Activated B cell treated with CpG ODN at 0.5 μM for 24 hours (primary cell): ENCODE measurements at regions of chr17 and their contacts with region 1.

Region 1: GRCh38 chr17:28416703-28417311 is 10.8 kb upstream of the SLC46A1 start:
- DNase-seq: peak; percentile 33
- ATAC-seq: peak; percentile 94
- H3K4me3 Mint-ChIP-seq: no peak overlapping the region
- H3K27ac Mint-ChIP-seq: no peak overlapping the region
- H3K4me1 Mint-ChIP-seq: peaks cover 4% of the 10 kb centered on the region
- H3K27me3 Mint-ChIP-seq: peaks cover 18% of the 10 kb centered on the region
- CTCF ChIP-seq: peak; percentile 72

Region 2: DNA sequence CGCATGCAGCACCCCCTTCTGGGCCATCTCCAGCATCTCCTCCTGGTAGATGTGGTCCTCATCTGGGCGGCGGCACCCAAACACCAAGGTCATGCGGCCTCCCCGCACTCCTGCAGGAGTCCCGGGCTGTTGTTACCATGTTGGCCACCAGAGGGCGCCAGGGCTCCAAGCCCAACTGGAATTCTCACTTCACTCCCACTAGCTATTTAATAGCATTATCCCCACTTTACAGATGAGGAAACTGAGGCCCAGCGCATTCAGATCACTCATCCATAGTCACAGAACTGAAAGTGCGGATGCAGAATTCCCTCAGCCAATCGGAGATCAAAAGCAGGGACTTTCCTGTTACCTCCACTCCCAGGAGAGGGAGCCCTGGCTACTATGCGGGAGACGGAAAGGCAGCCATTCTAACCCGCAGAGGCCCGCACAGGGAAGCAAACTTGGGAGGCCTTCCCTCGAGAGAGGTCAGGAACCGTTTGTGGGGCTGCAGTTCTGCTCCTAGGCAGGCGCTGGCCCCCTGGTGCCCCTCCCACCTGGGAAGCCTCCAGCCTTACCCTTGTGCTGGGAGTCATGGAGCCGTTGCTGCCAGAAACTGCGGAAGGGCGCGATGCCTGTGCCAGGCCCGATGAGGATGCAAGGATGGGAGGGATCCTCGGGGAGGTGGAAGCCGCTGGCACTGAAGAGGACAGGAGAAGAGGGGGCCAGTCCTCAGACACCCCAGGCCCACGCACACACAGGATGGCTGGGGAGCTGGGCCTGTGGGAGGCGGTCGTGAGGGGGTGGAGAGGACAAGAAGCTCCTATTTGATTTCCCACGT is 656.5 kb before region 1 on chr17:
- CTCF ChIA-PET with region 1: interaction called, 4 read pairs
- POLR2A ChIA-PET with region 1: no interaction called
- intact Hi-C with region 1: loop called (anchors 5 kb)
- DNase-seq: peak; percentile 73
- ATAC-seq: peak; percentile 50
- H3K4me3 Mint-ChIP-seq: no peak overlapping the region
- H3K27ac Mint-ChIP-seq: no peak overlapping the region
- H3K4me1 Mint-ChIP-seq: no peaks in the 10 kb centered on the region
- H3K27me3 Mint-ChIP-seq: peaks cover 4% of the 10 kb centered on the region
- CTCF ChIP-seq: peak; percentile 66

Region 3: DNA sequence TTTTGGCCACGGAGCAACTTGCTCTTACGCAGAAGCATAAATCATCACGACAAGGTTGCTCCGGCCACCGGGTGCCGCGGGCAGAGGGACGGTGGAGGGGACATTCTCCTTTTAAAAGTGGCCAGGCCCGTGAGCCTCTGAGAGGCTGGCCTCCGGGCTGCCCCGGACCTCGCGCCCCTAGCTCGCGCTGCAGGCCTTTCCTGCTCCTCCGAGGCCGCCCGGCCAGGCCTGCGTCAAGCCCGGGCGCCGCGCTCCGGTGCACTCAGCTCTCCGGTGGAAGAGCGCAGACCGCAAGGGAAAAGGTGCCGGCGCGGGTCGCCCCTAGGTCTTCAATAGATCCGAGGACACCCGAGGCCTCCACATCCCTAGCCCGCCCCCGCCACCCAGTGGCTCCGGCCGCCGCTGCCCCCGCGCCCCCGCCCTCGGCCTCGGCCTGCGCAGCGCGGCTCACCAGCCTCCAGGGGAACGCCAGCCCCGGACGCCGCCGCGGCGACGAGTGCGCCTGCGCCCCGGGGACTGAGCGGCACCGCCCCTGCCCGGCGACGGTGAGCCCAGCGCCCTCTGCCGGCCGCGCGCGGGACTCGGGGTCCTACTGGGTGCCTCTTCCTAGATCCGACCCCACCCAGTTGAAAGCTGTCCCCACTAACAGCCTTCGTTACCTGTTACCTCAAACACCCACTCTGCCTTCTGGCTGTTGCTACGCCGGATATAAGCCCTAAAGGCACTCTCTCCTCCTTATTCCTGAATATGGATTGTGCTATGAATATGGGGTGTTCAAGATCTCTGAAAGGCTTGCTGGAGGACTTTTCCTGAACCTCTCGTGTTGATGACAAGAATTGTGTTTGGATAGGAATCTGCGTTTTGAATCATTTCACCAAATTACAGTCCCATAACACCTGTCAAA is 523.7 kb before region 1 on chr17 and contains the start of gene LYRM9:
- CTCF ChIA-PET with region 1: interaction called, 3 read pairs
- POLR2A ChIA-PET with region 1: no interaction called
- intact Hi-C with region 1: loop called (anchors 2 kb)
- DNase-seq: peak; percentile 97
- ATAC-seq: peak; percentile 96
- H3K4me3 Mint-ChIP-seq: peak within 1 kb of the TSS; percentile 84
- H3K27ac Mint-ChIP-seq: peak within 1 kb of the TSS; percentile 69
- H3K4me1 Mint-ChIP-seq: peaks cover 17% of the 10 kb centered on the region
- H3K27me3 Mint-ChIP-seq: no peaks in the 10 kb centered on the region
- CTCF ChIP-seq: peak; percentile 91
- total RNA-seq, gene LYRM9: 7.2 and 7.5 TPM in 2 replicates

Region 4: GRCh38 chr17:28252436-28252835 is 164.4 kb before region 1 on chr17:
- CTCF ChIA-PET with region 1: interaction called, 3 read pairs
- POLR2A ChIA-PET with region 1: no interaction called
- intact Hi-C with region 1: loop called (anchors 5 kb)
- DNase-seq: no peak
- ATAC-seq: no peak
- H3K4me3 Mint-ChIP-seq: no peak overlapping the region
- H3K27ac Mint-ChIP-seq: no peak overlapping the region
- H3K4me1 Mint-ChIP-seq: peaks cover 6% of the 10 kb centered on the region
- H3K27me3 Mint-ChIP-seq: peaks cover 17% of the 10 kb centered on the region
- CTCF ChIP-seq: no peak

Region 5: GRCh38 chr17:28405632-28406472 is 11.0 kb before region 1 on chr17 and contains the start of gene SLC46A1:
- CTCF ChIA-PET with region 1: interaction called, 26 read pairs
- POLR2A ChIA-PET with region 1: interaction called, 3 read pairs
- intact Hi-C with region 1: loop called (anchors 1 kb)
- DNase-seq: peak; percentile 52
- ATAC-seq: peak; percentile 88
- H3K4me3 Mint-ChIP-seq: peak within 1 kb of the TSS; percentile 83
- H3K27ac Mint-ChIP-seq: peak within 1 kb of the TSS; percentile 41
- H3K4me1 Mint-ChIP-seq: peaks cover 8% of the 10 kb centered on the region
- H3K27me3 Mint-ChIP-seq: peaks cover 4% of the 10 kb centered on the region
- CTCF ChIP-seq: no peak
- total RNA-seq, gene SLC46A1: 1.5 and 2.1 TPM in 2 replicates

Region 6: GRCh38 chr17:28494445-28495188 is 77.8 kb after region 1 on chr17:
- CTCF ChIA-PET with region 1: no interaction called
- POLR2A ChIA-PET with region 1: no interaction called
- intact Hi-C with region 1: no loop called
- DNase-seq: peak; percentile 82
- ATAC-seq: peak; percentile 95
- H3K4me3 Mint-ChIP-seq: no peak overlapping the region
- H3K27ac Mint-ChIP-seq: no peak overlapping the region
- H3K4me1 Mint-ChIP-seq: peaks cover 11% of the 10 kb centered on the region
- H3K27me3 Mint-ChIP-seq: peaks cover 2% of the 10 kb centered on the region
- CTCF ChIP-seq: peak; percentile 63